K562 (cell line): ENCODE measurements at regions of chr17 and their contacts with region 1.

Region 1: GRCh38 chr17:48351831-48352332 is 78.1 kb downstream of the SKAP1 start:
- DNase-seq: peak; percentile 23 to 55 (median 32)
- ATAC-seq: no peak
- H3K4me3 ChIP-seq: no peak overlapping the region
- H3K27ac ChIP-seq: no peak overlapping the region
- H3K4me1 ChIP-seq: peaks cover 0 to 2% of the 10 kb centered on the region in 2 experiments; a peak in 1 of 5 replicates
- H3K27me3 ChIP-seq: no peaks in the 10 kb centered on the region
- CTCF ChIP-seq: peak; percentile 48 to 78 (median 49); a peak in 5 of 6 replicates
- EP300 ChIP-seq: no peak
- POLR2A ChIP-seq: no peak
- RAD21 ChIP-seq: peak; percentile 76 to 82

Region 2: DNA sequence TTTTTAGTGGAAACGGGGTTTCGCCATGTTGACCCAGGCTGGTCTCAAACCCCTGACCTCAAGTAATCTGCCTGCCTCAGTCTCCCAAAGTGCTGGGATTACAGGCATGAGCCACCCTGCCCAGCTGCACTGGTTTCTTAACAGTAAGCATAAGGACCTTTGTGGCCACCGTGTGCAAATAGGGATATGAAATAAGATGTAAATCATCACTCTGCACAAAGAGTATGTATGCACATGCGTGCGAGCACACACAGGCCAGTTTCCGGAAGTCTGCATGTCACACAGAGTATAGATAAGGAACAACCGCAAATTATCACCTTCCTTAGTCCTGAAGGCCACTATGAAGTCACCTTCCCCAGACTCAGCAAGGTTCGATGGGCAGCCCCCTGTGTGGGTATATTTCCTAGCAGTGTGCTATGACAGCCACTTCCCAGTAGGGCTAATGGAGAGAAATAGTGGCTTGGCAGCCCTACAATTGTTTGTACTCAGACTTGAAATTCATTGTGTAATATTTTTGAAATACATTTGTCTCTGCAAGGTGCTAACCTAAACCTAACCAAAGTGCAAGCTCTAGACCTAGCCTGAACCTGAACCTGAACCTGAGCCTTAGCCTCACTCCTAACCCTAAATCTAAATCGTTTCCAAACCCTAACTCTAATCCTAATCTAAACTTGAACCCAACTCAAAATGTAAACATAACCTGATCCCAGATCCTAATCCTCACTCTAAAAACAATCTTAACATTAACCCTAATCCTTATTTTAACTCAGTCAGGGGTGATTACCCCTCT is 126.5 kb after region 1 on chr17:
- CTCF ChIA-PET with region 1: no interaction called
- POLR2A ChIA-PET with region 1: no interaction called
- in situ Hi-C with region 1: no loop called
- intact Hi-C with region 1: no loop called
- DNase-seq: peak; percentile 63 to 90 (median 72)
- ATAC-seq: peak; percentile 96
- H3K4me3 ChIP-seq: no peak overlapping the region
- H3K27ac ChIP-seq: peak overlapping the region; percentile 76
- H3K4me1 ChIP-seq: peaks cover 5 to 38% of the 10 kb centered on the region in 2 experiments; a peak in 4 of 5 replicates
- H3K27me3 ChIP-seq: no peaks in the 10 kb centered on the region
- CTCF ChIP-seq: peak in 1 of 3 experiments; percentile 12; a peak in 1 of 6 replicates
- EP300 ChIP-seq: peak; percentile 90
- POLR2A ChIP-seq: no peak
- RAD21 ChIP-seq: peak in 1 of 2 experiments; percentile 19; a peak in 1 of 4 replicates

Region 3: DNA sequence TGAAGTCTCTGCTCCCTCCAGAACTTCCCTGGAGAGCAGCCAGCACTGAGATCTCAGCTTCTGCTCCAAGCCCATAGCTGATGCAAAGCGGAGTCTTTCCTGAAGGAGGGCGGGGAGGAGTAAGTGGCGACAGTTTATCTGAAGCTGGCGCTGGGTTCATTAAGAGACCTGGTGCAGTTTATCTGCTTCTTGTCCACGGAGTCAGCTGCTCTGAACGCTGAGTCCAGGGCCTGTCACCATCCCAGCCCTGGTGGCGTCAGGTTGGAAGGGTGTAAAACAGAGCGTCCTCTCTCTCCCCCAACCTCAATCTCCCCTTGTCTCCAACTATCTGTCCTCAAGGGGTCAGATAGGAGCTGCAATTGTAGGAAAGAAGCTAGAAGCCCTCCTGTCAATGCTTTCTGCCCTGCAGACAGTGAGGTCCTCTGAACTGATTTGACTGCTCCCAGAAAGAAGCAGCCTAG is 149.1 kb after region 1 on chr17:
- CTCF ChIA-PET with region 1: interaction called, 10 read pairs
- POLR2A ChIA-PET with region 1: no interaction called
- in situ Hi-C with region 1: no loop called
- intact Hi-C with region 1: no loop called
- DNase-seq: peak; percentile 35 to 86 (median 61)
- ATAC-seq: peak; percentile 97
- H3K4me3 ChIP-seq: no peak overlapping the region
- H3K27ac ChIP-seq: no peak overlapping the region; the same call in 2 of the 3 replicates
- H3K4me1 ChIP-seq: peaks cover 6 to 36% of the 10 kb centered on the region in 2 experiments; a peak in 4 of 5 replicates
- H3K27me3 ChIP-seq: no peaks in the 10 kb centered on the region
- CTCF ChIP-seq: peak; percentile 69 to 80 (median 73)
- EP300 ChIP-seq: peak; percentile 43
- POLR2A ChIP-seq: no peak
- RAD21 ChIP-seq: peak; percentile 67 to 86